ENCODE measurements at regions of chr12 and their contacts with region 1.

Region 1: DNA sequence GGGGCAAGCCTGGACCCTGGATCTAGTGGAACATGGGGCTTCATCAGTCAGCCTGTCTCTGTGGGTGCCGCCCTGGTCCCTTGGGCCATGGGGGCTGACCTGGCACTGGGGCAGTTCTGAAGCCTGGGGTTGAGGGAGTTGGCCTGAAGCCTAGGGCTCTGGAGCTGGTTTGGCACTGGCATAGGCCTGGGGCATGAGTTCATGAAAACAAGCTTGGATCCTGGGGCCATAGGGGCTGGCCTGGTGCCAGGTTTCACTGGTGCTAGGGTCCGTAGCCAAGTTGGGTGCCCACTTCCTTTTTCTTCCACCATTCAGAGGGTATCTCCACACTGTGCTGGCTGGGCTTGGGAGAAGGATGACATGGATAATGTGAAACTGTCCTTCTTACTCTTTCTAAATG is 26.6 kb upstream of the ANO4 start:
- DNase-seq: no peak
- ATAC-seq: no peak
- H3K4me3 ChIP-seq: no peak overlapping the region
- H3K4me3 Mint-ChIP-seq: no peak overlapping the region
- H3K27ac ChIP-seq: no peak overlapping the region
- H3K27ac Mint-ChIP-seq: no peak overlapping the region
- H3K4me1 ChIP-seq: no peaks in the 10 kb centered on the region
- H3K4me1 Mint-ChIP-seq: no peaks in the 10 kb centered on the region
- H3K27me3 ChIP-seq: peaks cover 0 to 2% of the 10 kb centered on the region in 2 experiments
- H3K27me3 Mint-ChIP-seq: peaks cover 0 to 4% of the 10 kb centered on the region in 2 donors

Region 2: GRCh38 chr12:100741084-100741711 is 26.8 kb before region 1 on chr12:
- CTCF ChIA-PET with region 1: no interaction called
- POLR2A ChIA-PET with region 1: no interaction called
- DNase-seq: peak in 1 of 35 experiments; percentile 7
- ATAC-seq: no peak
- H3K4me3 ChIP-seq: no peak overlapping the region
- H3K4me3 Mint-ChIP-seq: no peak overlapping the region
- H3K27ac ChIP-seq: no peak overlapping the region
- H3K27ac Mint-ChIP-seq: no peak overlapping the region
- H3K4me1 ChIP-seq: no peaks in the 10 kb centered on the region
- H3K4me1 Mint-ChIP-seq: no peaks in the 10 kb centered on the region
- H3K27me3 ChIP-seq: no peaks in the 10 kb centered on the region
- H3K27me3 Mint-ChIP-seq: peaks cover 3 to 6% of the 10 kb centered on the region in 2 donors

Region 3: GRCh38 chr12:100752841-100753240 is 15.1 kb before region 1 on chr12:
- CTCF ChIA-PET with region 1: interaction called in 1 of 2 experiments, 4 read pairs
- POLR2A ChIA-PET with region 1: interaction called in 1 of 2 experiments, 10 read pairs
- DNase-seq: no peak
- ATAC-seq: no peak
- H3K4me3 ChIP-seq: no peak overlapping the region
- H3K4me3 Mint-ChIP-seq: no peak overlapping the region
- H3K27ac ChIP-seq: no peak overlapping the region
- H3K27ac Mint-ChIP-seq: no peak overlapping the region
- H3K4me1 ChIP-seq: no peaks in the 10 kb centered on the region
- H3K4me1 Mint-ChIP-seq: no peaks in the 10 kb centered on the region
- H3K27me3 ChIP-seq: no peaks in the 10 kb centered on the region
- H3K27me3 Mint-ChIP-seq: peaks cover 3 to 13% of the 10 kb centered on the region in 2 donors